ENCODE measurements at regions of chr13 and their contacts with region 1.

Region 1: GRCh38 chr13:74287724-74288169 is 153.5 kb upstream of the KLF12 start:
- DNase-seq: peak; percentile 89
- ATAC-seq: peak; percentile 81
- H3K4me3 ChIP-seq: peak overlapping the region in 2 of 3 experiments; percentile 49 to 59; a peak in 5 of 6 replicates
- H3K27ac ChIP-seq: peak overlapping the region; percentile 57
- H3K4me1 ChIP-seq: peaks cover 31% of the 10 kb centered on the region
- H3K27me3 ChIP-seq: no peaks in the 10 kb centered on the region
- CTCF ChIP-seq: no peak
- EP300 ChIP-seq: peak; percentile 82 to 89; a peak in 3 of 4 replicates
- POLR2A ChIP-seq: no peak
- RAD21 ChIP-seq: no peak

Region 2: GRCh38 chr13:73835138-73835721 is 452.5 kb before region 1 on chr13:
- CTCF ChIA-PET with region 1: interaction called, 5 read pairs
- POLR2A ChIA-PET with region 1: no interaction called
- in situ Hi-C with region 1: loop called (anchors 10 kb)
- intact Hi-C with region 1: loop called (anchors 1 kb)
- DNase-seq: peak; percentile 39
- ATAC-seq: peak; percentile 69
- H3K4me3 ChIP-seq: no peak overlapping the region
- H3K27ac ChIP-seq: no peak overlapping the region
- H3K4me1 ChIP-seq: no peaks in the 10 kb centered on the region
- H3K27me3 ChIP-seq: no peaks in the 10 kb centered on the region
- CTCF ChIP-seq: peak; percentile 63
- EP300 ChIP-seq: no peak
- POLR2A ChIP-seq: no peak
- RAD21 ChIP-seq: no peak

Region 3: GRCh38 chr13:74026753-74027152 is 261.0 kb before region 1 on chr13:
- CTCF ChIA-PET with region 1: no interaction called
- POLR2A ChIA-PET with region 1: no interaction called
- in situ Hi-C with region 1: loop called (anchors 10 kb)
- intact Hi-C with region 1: loop called (anchors 1 kb)
- DNase-seq: no peak
- ATAC-seq: no peak
- H3K4me3 ChIP-seq: no peak overlapping the region
- H3K27ac ChIP-seq: no peak overlapping the region
- H3K4me1 ChIP-seq: peaks cover 35% of the 10 kb centered on the region
- H3K27me3 ChIP-seq: no peaks in the 10 kb centered on the region
- CTCF ChIP-seq: no peak
- EP300 ChIP-seq: no peak
- POLR2A ChIP-seq: no peak
- RAD21 ChIP-seq: no peak

Region 4: DNA sequence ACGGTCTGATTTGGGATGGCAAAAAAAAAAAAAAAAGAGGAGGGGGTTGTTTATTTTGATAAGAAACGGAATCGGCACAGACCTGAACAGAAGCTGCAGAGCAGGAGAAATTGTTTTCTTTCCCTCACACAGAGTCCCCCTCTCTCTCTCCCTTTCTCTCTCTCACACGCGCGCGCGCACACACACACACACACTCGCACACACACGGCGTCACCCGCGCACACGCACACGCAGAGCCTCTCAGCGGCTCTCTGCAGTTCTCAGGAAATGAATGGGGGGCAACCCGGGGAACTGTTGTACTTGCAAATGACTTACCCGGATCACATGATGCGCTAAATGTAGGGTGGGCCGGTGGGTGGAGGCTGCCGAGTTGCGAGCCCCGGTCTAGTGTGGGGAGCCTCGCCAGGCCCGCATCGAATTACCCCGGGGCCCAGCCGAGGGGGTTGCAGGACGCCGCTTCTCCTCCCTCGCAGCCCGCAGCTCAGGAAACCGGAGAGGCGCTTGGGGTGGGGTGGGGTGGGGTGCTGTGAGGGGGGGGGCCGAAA is 154.0 kb before region 1 on chr13:
- CTCF ChIA-PET with region 1: no interaction called
- POLR2A ChIA-PET with region 1: no interaction called
- in situ Hi-C with region 1: no loop called
- intact Hi-C with region 1: loop called (anchors 1 kb)
- DNase-seq: peak; percentile 35
- ATAC-seq: peak; percentile 45
- H3K4me3 ChIP-seq: peak overlapping the region; percentile 59 to 72 (median 64)
- H3K27ac ChIP-seq: peak overlapping the region; percentile 33
- H3K4me1 ChIP-seq: peaks cover 52% of the 10 kb centered on the region
- H3K27me3 ChIP-seq: peaks cover 0 to 31% of the 10 kb centered on the region in 2 experiments; a peak in 1 of 5 replicates
- CTCF ChIP-seq: no peak
- EP300 ChIP-seq: no peak
- POLR2A ChIP-seq: no peak
- RAD21 ChIP-seq: no peak

Region 5: DNA sequence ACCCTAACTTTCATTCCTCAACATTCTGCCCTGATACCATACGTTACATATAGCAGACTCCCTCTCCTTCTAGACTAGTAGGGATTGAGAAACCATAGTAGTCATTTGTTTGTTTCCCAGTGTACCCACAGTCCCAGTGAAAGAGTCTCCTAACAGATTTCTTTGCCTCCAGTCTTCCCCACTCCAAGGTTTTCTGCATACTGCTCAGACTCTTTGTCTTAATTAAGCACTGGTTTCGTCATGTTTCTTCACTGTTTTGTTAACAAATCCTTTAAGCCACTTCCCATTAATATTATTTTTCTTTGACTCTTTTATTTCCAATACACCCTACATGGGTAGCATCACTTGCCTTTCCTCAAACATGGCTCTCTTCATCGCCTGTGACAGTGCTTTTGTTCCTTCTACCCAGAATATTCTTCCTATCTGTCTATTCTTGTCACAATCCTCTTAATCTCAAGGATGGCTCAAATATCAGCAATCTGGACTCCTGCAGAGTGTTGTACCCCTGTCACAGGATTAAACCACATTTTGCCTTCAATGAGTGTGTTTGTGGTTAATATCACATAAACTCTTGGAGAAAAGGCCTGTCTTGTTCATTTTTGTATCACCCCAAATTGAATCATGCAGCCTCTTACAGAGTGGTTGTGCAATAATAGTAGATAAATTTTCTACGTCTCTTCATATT is 60.8 kb before region 1 on chr13:
- CTCF ChIA-PET with region 1: no interaction called
- POLR2A ChIA-PET with region 1: no interaction called
- in situ Hi-C with region 1: no loop called
- intact Hi-C with region 1: loop called (anchors 5 kb)
- DNase-seq: no peak
- ATAC-seq: no peak
- H3K4me3 ChIP-seq: no peak overlapping the region
- H3K27ac ChIP-seq: peak overlapping the region; percentile 93
- H3K4me1 ChIP-seq: peaks cover 38% of the 10 kb centered on the region
- H3K27me3 ChIP-seq: no peaks in the 10 kb centered on the region
- CTCF ChIP-seq: no peak
- EP300 ChIP-seq: no peak
- POLR2A ChIP-seq: no peak
- RAD21 ChIP-seq: no peak